K562 (cell line): ENCODE measurements at regions of chr4 and their contacts with region 1.

Region 1: DNA sequence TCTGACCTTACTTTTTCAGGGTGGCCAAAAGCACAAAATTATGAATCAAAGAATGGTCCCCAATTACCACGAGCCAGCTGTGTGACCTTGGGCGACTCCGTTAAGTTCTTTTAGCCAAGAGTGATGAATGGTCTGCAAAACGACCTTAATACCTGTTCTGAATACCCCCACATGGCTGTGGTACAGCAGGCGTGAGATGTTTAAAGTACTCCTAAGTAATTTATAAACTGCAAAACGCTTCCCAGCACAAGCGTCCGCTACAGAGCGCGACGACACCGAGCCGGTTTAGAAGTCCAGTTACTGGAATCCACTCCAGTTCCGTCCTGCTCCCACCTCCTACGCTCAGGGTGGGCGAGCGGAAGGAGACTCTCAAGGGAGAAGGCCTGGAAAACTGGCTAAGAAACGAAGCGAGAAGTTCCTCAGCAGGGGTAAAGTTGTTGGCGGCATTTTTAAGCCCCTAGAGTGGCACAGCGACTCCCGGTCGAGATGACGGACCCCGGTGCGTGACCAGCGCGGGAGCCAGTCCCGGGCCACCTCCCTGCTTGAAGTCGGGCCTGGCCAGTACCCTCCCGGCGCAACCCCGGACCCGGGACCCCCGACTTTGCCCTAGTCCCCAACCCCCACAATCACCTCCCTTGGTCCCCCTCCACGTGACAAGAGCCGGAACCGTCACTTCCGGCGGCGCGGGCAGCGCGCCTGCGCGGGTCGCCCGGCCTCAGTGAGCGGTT is 683 bp upstream of the BMP2K start:
- DNase-seq: peak in 3 of 4 experiments; percentile 89 to 92 (median 91)
- ATAC-seq: peak; percentile 42
- H3K4me3 ChIP-seq: peak overlapping the region; percentile 89
- H3K27ac ChIP-seq: peak overlapping the region; percentile 98
- H3K4me1 ChIP-seq: peaks cover 15 to 34% of the 10 kb centered on the region in 2 experiments
- H3K27me3 ChIP-seq: no peaks in the 10 kb centered on the region
- CTCF ChIP-seq: no peak
- EP300 ChIP-seq: peak; percentile 16; the same call in 1 of the 2 replicates
- POLR2A ChIP-seq: peak; percentile 76
- RAD21 ChIP-seq: no peak

Region 2: DNA sequence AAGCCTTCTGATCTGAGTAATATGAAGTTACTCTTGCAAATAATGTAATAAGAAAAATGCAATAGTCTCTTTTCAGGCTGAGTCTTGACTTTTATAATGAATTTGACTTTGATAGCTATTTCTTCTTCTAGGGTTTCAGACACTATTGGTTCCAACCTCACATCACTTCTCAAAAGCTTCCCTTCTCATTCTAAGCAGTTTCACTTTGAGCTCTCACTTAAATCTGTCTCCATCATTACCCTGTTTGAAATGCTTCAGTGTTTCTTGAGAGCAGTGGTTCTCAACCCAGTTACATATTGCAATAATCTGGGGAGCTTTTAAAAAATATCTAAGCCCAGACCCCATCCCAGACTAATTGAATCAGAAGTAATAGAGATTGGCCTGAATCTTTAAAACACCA is 39.8 kb before region 1 on chr4:
- CTCF ChIA-PET with region 1: no interaction called
- POLR2A ChIA-PET with region 1: no interaction called
- in situ Hi-C with region 1: no loop called
- intact Hi-C with region 1: loop called (anchors 2 kb)
- DNase-seq: no peak
- ATAC-seq: no peak
- H3K4me3 ChIP-seq: no peak overlapping the region
- H3K27ac ChIP-seq: no peak overlapping the region
- H3K4me1 ChIP-seq: peaks cover 22 to 67% of the 10 kb centered on the region in 2 experiments
- H3K27me3 ChIP-seq: no peaks in the 10 kb centered on the region
- CTCF ChIP-seq: no peak
- EP300 ChIP-seq: no peak
- POLR2A ChIP-seq: no peak
- RAD21 ChIP-seq: no peak

Region 3: DNA sequence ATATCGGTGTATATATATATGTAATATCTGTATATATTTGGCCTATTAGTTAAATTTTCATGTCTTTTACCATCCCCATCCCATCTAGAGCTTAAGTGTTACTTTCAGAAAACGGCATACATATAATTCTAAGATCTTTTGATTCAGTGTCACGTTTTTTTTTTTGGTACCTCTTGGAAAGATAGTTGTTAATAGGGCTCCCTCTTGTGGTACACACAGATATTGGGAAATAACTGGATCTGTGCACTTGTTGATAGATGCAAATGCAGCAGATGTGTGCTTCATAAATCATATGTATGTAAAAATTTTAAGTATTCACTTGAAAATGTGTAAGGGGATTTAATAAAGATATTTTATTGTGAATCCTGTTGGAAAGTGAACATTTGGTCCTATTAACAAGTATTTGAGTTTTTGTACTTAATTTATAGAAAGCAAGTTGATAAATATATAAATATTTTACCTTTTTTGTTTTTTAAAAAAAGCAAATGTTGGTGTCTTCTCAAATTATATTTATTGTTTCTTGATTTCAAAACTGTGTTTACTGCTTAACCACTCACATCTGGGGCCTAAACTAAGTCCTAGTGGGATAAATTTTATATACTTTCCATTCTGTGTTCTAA is 89.0 kb after region 1 on chr4:
- CTCF ChIA-PET with region 1: no interaction called
- POLR2A ChIA-PET with region 1: no interaction called
- in situ Hi-C with region 1: no loop called
- intact Hi-C with region 1: loop called (anchors 5 kb)
- DNase-seq: peak; percentile 24 to 75 (median 42)
- ATAC-seq: peak; percentile 81
- H3K4me3 ChIP-seq: no peak overlapping the region
- H3K27ac ChIP-seq: no peak overlapping the region
- H3K4me1 ChIP-seq: no peaks in the 10 kb centered on the region
- H3K27me3 ChIP-seq: no peaks in the 10 kb centered on the region
- CTCF ChIP-seq: peak; percentile 48 to 79 (median 57); a peak in 5 of 6 replicates
- EP300 ChIP-seq: no peak
- POLR2A ChIP-seq: no peak
- RAD21 ChIP-seq: peak; percentile 61 to 75